ENCODE measurements at regions of chr17 and their contacts with region 1.

Region 1: GRCh38 chr17:21425736-21426135 is 49.6 kb downstream of the KCNJ12 start:
- DNase-seq: no peak
- ATAC-seq: no peak
- H3K4me3 ChIP-seq: no peak overlapping the region
- H3K27ac ChIP-seq: no peak overlapping the region
- H3K4me1 ChIP-seq: peaks cover 0 to 16% (median 3%) of the 10 kb centered on the region in 9 donors
- H3K27me3 ChIP-seq: no peaks in the 10 kb centered on the region
- CTCF ChIP-seq: no peak

Region 2: DNA sequence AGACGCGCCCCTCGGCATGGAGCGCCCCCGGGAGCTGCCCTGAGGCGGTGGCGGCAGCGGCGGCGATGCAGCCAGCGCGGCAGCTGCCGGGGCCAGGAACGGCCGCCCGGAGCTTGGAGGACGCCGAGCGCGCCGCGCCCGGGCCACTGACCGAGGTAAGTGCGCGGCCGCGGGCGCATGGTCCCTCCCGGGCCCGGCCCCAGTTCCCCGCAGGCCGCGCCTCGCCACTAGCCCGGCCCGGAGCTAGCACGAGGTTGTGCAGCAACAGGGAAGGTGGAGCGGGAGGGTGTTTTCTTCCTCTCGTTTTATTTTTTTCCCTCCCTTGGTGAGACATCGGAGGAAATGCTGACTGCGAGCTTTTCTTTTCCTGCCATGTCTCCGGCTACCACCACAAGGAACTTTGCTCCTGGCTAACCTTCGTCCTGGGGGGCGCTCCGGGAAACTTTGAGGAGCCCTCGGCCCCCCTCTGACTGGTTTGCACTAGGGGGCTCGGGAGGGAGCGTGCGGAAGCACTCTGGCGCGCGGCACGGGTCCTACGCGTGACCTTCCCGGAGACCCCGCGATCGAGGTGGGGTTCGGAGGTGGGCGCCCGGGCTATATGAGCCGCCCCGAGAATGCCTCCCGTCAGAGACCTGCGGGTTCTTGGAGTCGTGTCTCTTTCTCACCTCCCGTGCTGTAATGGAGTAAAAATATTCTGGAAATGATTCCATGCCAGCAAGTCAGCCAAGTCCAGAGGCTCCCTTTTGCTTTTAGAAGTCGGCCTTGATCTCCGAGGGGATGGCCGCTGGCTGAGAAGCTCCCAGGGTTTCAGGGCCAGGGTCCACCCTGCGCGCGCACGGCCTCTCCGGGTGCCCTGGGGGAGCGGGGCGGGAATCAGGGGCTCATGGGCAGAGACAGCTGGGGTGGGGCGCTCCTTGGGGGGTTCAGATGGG is 48.7 kb before region 1 on chr17:
- intact Hi-C with region 1: loop called in 1 of 10 experiments (anchors 10 kb)
- DNase-seq: peak in 1 of 2 donors; percentile 36
- ATAC-seq: peak in 7 of 8 donors; percentile 7 to 34 (median 31)
- H3K4me3 ChIP-seq: peak overlapping the region; percentile 41 to 66 (median 60)
- H3K27ac ChIP-seq: peak overlapping the region in 9 of 10 donors; percentile 40 to 68 (median 62)
- H3K4me1 ChIP-seq: peaks cover 15 to 44% (median 34%) of the 10 kb centered on the region in 9 donors
- H3K27me3 ChIP-seq: peaks cover 0 to 50% (median 5%) of the 10 kb centered on the region in 7 donors
- CTCF ChIP-seq: no peak